ENCODE measurements at regions of chr17 and their contacts with region 1.

Region 1: GRCh38 chr17:77957857-77958715 is at the start of gene TNRC6C:
- DNase-seq: peak; percentile 100
- ATAC-seq: peak; percentile 81
- H3K4me3 ChIP-seq: peak within 1 kb of the TSS; percentile 73 to 82 (median 77)
- H3K4me3 Mint-ChIP-seq: peak within 1 kb of the TSS; percentile 95
- H3K27ac ChIP-seq: peak within 1 kb of the TSS; percentile 74 to 85
- H3K27ac Mint-ChIP-seq: peak within 1 kb of the TSS; percentile 97
- H3K4me1 ChIP-seq: peaks cover 27 to 28% of the 10 kb centered on the region in 2 donors
- H3K4me1 Mint-ChIP-seq: peaks cover 44% of the 10 kb centered on the region
- H3K27me3 ChIP-seq: peaks cover 0 to 22% (median 11%) of the 10 kb centered on the region in 4 experiments
- H3K27me3 Mint-ChIP-seq: peaks cover 21% of the 10 kb centered on the region
- CTCF ChIP-seq: no peak
- total RNA-seq, gene TNRC6C: 63.8 and 66.8 TPM in 2 replicates

Region 2: DNA sequence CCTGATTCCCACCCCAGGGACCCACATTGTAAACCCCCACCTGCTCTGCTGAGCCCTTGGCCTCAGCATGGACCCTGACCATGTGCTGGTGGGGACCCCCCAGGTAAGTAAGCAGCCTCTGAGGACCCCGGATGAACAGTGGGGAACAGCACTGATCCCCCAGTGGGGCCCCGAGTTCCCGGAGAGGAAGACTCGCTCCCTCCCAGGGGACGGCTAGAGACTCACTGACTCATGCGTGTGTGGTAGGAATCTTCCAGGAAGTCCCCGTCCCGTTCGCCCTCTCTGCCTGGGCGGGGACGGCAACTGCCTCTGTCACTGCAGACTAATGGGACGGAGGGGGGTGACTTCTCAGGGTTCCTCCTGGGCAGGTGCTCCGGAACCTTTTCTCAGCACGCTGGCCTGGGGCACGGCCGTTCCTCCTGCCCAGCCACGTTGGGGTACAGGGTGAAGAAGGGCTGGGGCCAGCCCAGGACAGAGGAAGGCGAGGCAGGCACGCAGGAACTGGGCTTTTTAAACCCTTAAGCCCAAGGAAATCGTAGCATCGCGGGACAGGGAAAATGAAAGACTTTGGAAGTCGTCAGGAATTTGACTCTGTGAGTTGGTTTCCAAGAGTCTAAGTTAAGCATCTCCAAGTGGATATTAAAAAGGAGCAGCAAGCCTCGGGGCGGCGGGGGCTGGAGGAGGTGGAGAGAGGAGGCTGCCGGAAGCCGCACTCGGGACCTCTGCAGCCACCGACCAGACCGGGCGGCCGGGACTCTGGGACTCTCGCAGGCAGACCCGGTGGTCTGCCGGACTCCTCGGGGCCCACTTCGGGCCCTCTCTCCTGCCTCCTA is 638.7 kb before region 1 on chr17:
- CTCF ChIA-PET with region 1: no interaction called
- POLR2A ChIA-PET with region 1: interaction called, 6 read pairs
- intact Hi-C with region 1: loop called (anchors 2 kb)
- DNase-seq: peak; percentile 84
- ATAC-seq: peak; percentile 34
- H3K4me3 ChIP-seq: peak overlapping the region in 4 of 5 experiments; percentile 16 to 51 (median 33)
- H3K4me3 Mint-ChIP-seq: peak overlapping the region; percentile 91
- H3K27ac ChIP-seq: peak overlapping the region; percentile 53 to 75
- H3K27ac Mint-ChIP-seq: peak overlapping the region; percentile 90
- H3K4me1 ChIP-seq: peaks cover 62 to 66% of the 10 kb centered on the region in 2 donors
- H3K4me1 Mint-ChIP-seq: peaks cover 65% of the 10 kb centered on the region
- H3K27me3 ChIP-seq: no peaks in the 10 kb centered on the region
- H3K27me3 Mint-ChIP-seq: no peaks in the 10 kb centered on the region
- CTCF ChIP-seq: no peak

Region 3: DNA sequence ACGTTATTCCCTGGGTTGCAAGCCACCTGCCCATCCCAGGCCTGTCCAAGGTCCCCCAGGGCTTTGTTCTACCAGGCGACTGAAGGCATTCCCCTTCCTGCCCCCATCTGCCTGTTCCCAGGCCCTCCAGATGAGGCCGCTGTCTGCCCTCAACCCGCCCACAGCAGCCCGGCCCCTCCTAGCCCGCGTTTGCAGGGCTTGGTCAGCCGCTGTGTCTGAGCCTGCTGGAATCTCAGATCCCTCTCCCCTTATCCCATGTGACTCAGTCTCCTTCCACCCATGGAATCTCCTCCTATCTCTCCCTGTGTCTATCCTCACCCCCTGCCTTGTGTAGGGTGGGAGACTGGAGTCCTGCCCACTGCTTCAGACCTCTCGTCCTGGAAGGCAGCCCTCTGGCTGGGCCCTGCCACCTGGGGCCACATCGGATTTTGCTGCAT is 185.6 kb before region 1 on chr17:
- CTCF ChIA-PET with region 1: interaction called, 8 read pairs
- POLR2A ChIA-PET with region 1: no interaction called
- intact Hi-C with region 1: loop called (anchors 5 kb)
- DNase-seq: peak; percentile 79
- ATAC-seq: peak; percentile 91
- H3K4me3 ChIP-seq: no peak overlapping the region
- H3K4me3 Mint-ChIP-seq: no peak overlapping the region
- H3K27ac ChIP-seq: no peak overlapping the region
- H3K27ac Mint-ChIP-seq: no peak overlapping the region
- H3K4me1 ChIP-seq: peaks cover 0 to 11% of the 10 kb centered on the region in 2 donors
- H3K4me1 Mint-ChIP-seq: peaks cover 13% of the 10 kb centered on the region
- H3K27me3 ChIP-seq: peaks cover 0 to 4% (median 2%) of the 10 kb centered on the region in 4 experiments
- H3K27me3 Mint-ChIP-seq: peaks cover 8% of the 10 kb centered on the region
- CTCF ChIP-seq: peak; percentile 92

Region 4: GRCh38 chr17:77869665-77870132 is 88.4 kb before region 1 on chr17:
- CTCF ChIA-PET with region 1: interaction called, 4 read pairs
- POLR2A ChIA-PET with region 1: interaction called, 48 read pairs
- intact Hi-C with region 1: loop called (anchors 1 kb)
- DNase-seq: peak; percentile 97
- ATAC-seq: peak; percentile 94
- H3K4me3 ChIP-seq: peak overlapping the region; percentile 20 to 38 (median 27)
- H3K4me3 Mint-ChIP-seq: peak overlapping the region; percentile 69
- H3K27ac ChIP-seq: peak overlapping the region; percentile 52 to 77
- H3K27ac Mint-ChIP-seq: peak overlapping the region; percentile 83
- H3K4me1 ChIP-seq: peaks cover 48 to 63% of the 10 kb centered on the region in 2 donors
- H3K4me1 Mint-ChIP-seq: peaks cover 66% of the 10 kb centered on the region
- H3K27me3 ChIP-seq: peaks cover 0 to 11% (median 4%) of the 10 kb centered on the region in 4 experiments
- H3K27me3 Mint-ChIP-seq: peaks cover 13% of the 10 kb centered on the region
- CTCF ChIP-seq: no peak

Region 5: GRCh38 chr17:77881545-77881944 is 76.5 kb before region 1 on chr17:
- CTCF ChIA-PET with region 1: interaction called, 11 read pairs
- POLR2A ChIA-PET with region 1: interaction called, 33 read pairs
- intact Hi-C with region 1: loop called (anchors 1 kb)
- DNase-seq: peak; percentile 91
- ATAC-seq: peak; percentile 85
- H3K4me3 ChIP-seq: peak overlapping the region in 4 of 5 experiments; percentile 25 to 46 (median 38)
- H3K4me3 Mint-ChIP-seq: peak overlapping the region; percentile 89
- H3K27ac ChIP-seq: peak overlapping the region; percentile 49 to 72
- H3K27ac Mint-ChIP-seq: peak overlapping the region; percentile 88
- H3K4me1 ChIP-seq: peaks cover 74 to 80% of the 10 kb centered on the region in 2 donors
- H3K4me1 Mint-ChIP-seq: peaks cover 71% of the 10 kb centered on the region
- H3K27me3 ChIP-seq: peaks cover 0 to 11% (median 0%) of the 10 kb centered on the region in 4 experiments
- H3K27me3 Mint-ChIP-seq: no peaks in the 10 kb centered on the region
- CTCF ChIP-seq: no peak

Region 6: DNA sequence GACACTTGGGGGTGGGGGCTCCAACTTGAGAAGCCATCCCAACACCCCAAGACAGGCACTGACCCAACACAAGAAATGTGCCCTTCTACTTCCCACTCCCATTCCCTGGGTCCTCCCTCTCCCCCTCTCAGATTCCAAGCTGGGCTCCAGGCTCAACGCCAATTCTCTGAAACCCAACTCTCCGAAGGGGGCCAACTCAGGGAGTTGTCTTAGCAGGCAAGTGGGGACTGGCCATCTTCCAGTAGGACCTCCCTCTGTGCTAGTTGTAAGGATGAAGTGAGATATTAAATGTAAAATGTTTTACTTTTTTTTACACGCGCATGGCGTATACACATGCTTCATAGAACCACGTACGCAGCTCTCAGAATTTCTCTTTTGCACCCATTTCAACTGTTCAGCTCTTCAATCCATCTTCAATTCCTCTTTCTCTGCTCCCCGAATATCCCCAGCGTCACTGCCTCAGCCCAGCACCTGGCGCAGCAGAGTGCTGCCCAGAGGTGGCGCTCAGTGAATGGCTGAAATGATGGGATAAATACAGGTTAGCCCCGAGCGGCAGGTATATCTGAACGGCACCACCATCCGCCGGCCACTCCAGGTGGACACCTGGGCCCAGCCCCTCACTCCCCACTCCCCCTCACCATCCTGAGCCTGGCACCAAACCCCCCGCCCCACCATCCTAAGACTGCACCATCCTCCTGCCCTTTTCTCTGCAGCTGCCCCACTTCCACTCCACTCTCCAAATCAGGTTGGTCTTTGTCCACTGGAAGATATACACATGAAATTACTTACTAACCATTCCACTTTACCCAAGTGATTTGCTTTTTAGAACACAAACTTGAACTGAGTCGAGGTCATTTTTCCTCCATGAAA is 43.5 kb before region 1 on chr17:
- CTCF ChIA-PET with region 1: interaction called, 5 read pairs
- POLR2A ChIA-PET with region 1: interaction called, 19 read pairs
- intact Hi-C with region 1: loop called (anchors 1 kb)
- DNase-seq: peak; percentile 56
- ATAC-seq: no peak
- H3K4me3 ChIP-seq: no peak overlapping the region
- H3K4me3 Mint-ChIP-seq: no peak overlapping the region
- H3K27ac ChIP-seq: no peak overlapping the region
- H3K27ac Mint-ChIP-seq: no peak overlapping the region
- H3K4me1 ChIP-seq: peaks cover 18 to 28% of the 10 kb centered on the region in 2 donors
- H3K4me1 Mint-ChIP-seq: peaks cover 24% of the 10 kb centered on the region
- H3K27me3 ChIP-seq: peaks cover 0 to 51% (median 28%) of the 10 kb centered on the region in 4 experiments
- H3K27me3 Mint-ChIP-seq: peaks cover 66% of the 10 kb centered on the region
- CTCF ChIP-seq: no peak

Region 7: GRCh38 chr17:77995146-77995852 is 37.2 kb after region 1 on chr17:
- CTCF ChIA-PET with region 1: no interaction called
- POLR2A ChIA-PET with region 1: no interaction called
- intact Hi-C with region 1: no loop called
- DNase-seq: no peak
- ATAC-seq: no peak
- H3K4me3 ChIP-seq: no peak overlapping the region
- H3K4me3 Mint-ChIP-seq: no peak overlapping the region
- H3K27ac ChIP-seq: no peak overlapping the region
- H3K27ac Mint-ChIP-seq: no peak overlapping the region
- H3K4me1 ChIP-seq: no peaks in the 10 kb centered on the region
- H3K4me1 Mint-ChIP-seq: peaks cover 23% of the 10 kb centered on the region
- H3K27me3 ChIP-seq: no peaks in the 10 kb centered on the region
- H3K27me3 Mint-ChIP-seq: no peaks in the 10 kb centered on the region
- CTCF ChIP-seq: no peak

Measured in B cell (primary cell).